ENCODE measurements at regions of chr1 and their contacts with region 1.

Region 1: GRCh38 chr1:235767795-235768194 is 98.9 kb downstream of the LYST start:
- DNase-seq: no peak
- H3K4me3 Mint-ChIP-seq: no peak overlapping the region
- H3K27ac Mint-ChIP-seq: no peak overlapping the region
- H3K4me1 Mint-ChIP-seq: peaks cover 8% of the 10 kb centered on the region
- H3K27me3 Mint-ChIP-seq: no peaks in the 10 kb centered on the region

Region 2: DNA sequence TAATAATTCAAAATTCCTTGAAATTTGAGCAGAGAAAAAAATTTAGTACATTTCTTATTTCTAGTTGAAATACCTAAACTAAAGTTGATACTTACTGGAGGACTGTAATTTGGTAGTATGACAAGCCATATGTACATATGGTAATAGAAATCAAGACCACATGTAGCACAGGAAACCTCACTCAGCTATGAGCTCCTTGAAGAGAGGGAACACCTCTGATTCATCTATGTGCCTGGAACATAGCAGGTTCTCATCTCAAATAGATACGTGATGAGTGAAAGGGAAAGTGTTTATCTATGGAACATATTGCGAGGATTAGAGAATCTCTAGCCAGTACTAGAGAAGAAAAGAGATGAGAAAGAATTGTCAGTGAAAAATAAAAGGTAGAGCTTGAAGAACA is 70.3 kb before region 1 on chr1:
- intact Hi-C with region 1: loop called (anchors 10 kb)
- DNase-seq: no peak
- H3K4me3 Mint-ChIP-seq: no peak overlapping the region
- H3K27ac Mint-ChIP-seq: peak overlapping the region; percentile 80
- H3K4me1 Mint-ChIP-seq: peaks cover 16% of the 10 kb centered on the region
- H3K27me3 Mint-ChIP-seq: no peaks in the 10 kb centered on the region